ENCODE measurements at regions of chr11 and their contacts with region 1.

Region 1: DNA sequence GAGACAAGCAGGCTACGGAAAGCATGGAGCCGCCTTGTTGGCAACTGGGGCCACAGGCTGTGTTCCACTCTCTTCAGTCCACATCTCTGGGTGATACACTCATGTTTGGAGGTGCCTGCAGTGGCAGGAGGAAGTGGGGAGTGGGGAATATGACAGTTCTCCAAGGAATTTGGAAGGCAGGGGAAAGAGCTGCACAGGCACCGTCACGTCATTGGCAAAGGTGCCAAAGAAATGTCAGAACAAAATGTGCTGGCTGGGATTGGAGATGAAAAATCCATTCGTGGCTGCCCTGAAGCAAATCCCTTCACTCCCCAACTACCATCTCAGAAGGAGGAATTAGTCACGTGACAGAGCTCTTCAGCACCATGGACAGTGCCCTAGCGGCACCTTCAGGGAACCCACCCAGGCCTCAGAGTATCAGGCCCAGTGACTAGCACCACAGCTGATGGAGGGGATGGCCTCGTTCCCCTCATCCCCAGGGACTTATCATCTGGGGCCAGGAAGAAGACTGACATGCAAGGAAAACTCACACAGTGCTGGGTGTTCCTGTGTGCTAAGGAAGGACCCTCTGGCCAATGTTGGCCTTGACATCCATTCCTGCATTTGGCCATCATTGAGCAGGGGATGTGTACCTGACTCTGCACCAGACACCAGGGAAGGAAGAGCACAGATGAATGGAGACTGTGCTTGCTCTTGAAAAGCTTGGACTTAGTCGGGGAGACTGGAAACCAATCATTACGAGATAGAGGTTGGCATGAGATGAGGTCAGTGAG is 48.5 kb upstream of the PRDM11 start:
- DNase-seq: peak; percentile 80
- H3K4me3 Mint-ChIP-seq: no peak overlapping the region
- H3K27ac Mint-ChIP-seq: no peak overlapping the region
- H3K4me1 Mint-ChIP-seq: peaks cover 42% of the 10 kb centered on the region
- H3K27me3 Mint-ChIP-seq: no peaks in the 10 kb centered on the region
- CTCF ChIP-seq: no peak

Region 2: DNA sequence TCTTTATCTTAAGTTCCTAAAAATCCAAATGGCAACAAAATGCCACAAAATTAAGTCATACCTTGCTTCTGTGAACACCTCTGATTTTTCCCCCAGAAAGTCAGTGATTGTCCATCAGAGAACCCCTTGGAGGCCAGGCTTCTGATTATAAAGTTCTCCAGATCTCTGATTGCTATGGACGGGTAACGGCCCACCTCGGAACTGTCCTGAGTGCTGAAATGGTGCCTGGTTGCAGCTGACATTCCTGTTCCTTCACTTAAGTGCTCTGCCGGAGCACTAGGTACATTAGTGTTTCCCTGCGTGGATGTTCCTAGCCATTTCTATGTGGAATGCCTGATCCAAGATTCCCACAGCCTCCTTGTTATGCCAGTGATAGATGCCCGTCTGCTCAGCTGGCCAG is 482.5 kb after region 1 on chr11:
- CTCF ChIA-PET with region 1: no interaction called
- POLR2A ChIA-PET with region 1: no interaction called
- intact Hi-C with region 1: loop called (anchors 5 kb)
- DNase-seq: peak; percentile 49
- H3K4me3 Mint-ChIP-seq: no peak overlapping the region
- H3K27ac Mint-ChIP-seq: no peak overlapping the region
- H3K4me1 Mint-ChIP-seq: no peaks in the 10 kb centered on the region
- H3K27me3 Mint-ChIP-seq: peaks cover 46% of the 10 kb centered on the region
- CTCF ChIP-seq: no peak